GM12878 (cell line): ENCODE measurements at regions of chr10 and their contacts with region 1.

Region 1: GRCh38 chr10:87918254-87918859 is 54.9 kb downstream of the PTEN start:
- DNase-seq: no peak
- ATAC-seq: no peak
- H3K4me3 ChIP-seq: no peak overlapping the region
- H3K27ac ChIP-seq: no peak overlapping the region
- H3K4me1 ChIP-seq: peaks cover 6% of the 10 kb centered on the region
- H3K27me3 ChIP-seq: no peaks in the 10 kb centered on the region
- CTCF ChIP-seq: no peak
- EP300 ChIP-seq: no peak
- POLR2A ChIP-seq: no peak
- RAD21 ChIP-seq: no peak

Region 2: DNA sequence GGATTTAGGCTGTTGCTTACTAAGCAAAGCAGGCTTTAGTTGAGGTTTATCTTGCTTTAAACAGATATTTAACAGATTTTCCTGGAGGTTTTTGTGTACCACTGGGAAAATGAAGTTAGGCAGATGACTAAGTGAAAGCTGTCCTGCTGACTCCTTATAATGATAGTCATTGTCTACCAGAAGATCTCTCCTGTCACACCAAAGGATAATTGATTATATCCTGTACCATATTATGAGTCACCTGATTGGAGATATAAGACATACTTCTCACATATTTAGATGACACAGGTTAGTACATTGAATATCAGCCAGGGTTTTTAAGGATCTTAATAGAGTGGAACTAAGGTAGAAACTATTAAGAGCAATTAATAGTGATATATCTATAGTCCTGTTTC is 13.5 kb after region 1 on chr10:
- CTCF ChIA-PET with region 1: no interaction called
- POLR2A ChIA-PET with region 1: interaction called, 4 read pairs
- RAD21 ChIA-PET with region 1: no interaction called
- SMC1A ChIA-PET with region 1: interaction called, 18 read pairs
- in situ Hi-C with region 1: no loop called
- intact Hi-C with region 1: no loop called
- DNase-seq: no peak
- ATAC-seq: peak; percentile 42
- H3K4me3 ChIP-seq: no peak overlapping the region
- H3K27ac ChIP-seq: peak overlapping the region; percentile 71
- H3K4me1 ChIP-seq: peaks cover 39% of the 10 kb centered on the region
- H3K27me3 ChIP-seq: no peaks in the 10 kb centered on the region
- CTCF ChIP-seq: no peak
- EP300 ChIP-seq: no peak
- POLR2A ChIP-seq: no peak
- RAD21 ChIP-seq: no peak